ENCODE measurements at regions of chr10 and their contacts with region 1.

Region 1: DNA sequence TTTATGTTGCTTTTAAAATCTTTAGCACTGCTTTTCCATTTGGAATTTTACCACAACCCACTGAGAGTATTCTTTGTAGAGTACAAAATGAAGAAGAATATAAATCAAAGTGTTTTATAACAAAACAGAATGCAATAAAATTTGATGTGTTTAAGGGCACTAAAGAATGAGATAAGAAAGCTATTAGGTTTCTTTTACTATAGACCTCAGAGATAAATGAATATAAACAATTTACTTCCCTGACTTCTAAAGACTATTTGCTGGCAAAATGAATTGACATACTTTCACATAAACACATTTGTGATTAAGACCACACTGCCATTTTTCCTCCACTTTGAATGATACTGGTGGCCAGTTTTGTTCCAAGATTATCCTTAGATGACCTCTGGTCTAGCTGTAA is 124.5 kb downstream of the ITGA8 start:
- DNase-seq: no peak
- H3K4me3 ChIP-seq: no peak overlapping the region
- H3K27ac ChIP-seq: no peak overlapping the region
- H3K4me1 ChIP-seq: no peaks in the 10 kb centered on the region
- H3K27me3 ChIP-seq: no peaks in the 10 kb centered on the region
- CTCF ChIP-seq: no peak
- POLR2A ChIP-seq: no peak

Region 2: DNA sequence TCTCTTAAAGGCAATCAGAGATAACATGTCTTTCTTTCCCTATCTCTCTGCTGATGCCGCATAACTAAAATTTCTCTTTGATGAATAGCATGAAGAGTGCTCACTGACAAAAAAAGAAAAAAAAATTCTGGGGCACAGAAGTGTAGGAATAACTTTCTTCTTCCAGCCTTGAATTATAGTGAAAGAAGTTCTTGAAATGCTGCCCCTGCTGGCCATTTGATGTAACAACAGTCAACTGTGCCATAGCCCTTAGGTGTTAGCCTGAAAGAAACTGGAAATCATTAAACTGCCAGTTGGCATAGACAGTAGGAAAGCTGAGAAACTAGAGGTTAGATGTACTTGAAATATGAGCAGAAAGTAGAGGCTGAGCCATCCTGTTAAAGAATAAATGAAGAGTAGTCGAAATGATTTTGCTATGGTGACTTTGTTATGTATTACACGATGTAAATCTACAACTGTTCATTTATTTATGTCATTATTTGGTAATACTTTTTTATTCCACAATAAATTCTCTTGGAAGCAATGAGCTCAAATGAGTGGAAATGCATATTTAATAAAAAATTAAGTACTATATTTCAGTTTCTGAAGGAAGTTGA is 175.9 kb before region 1 on chr10:
- intact Hi-C with region 1: no loop called
- DNase-seq: peak; percentile 62
- H3K4me3 ChIP-seq: no peak overlapping the region
- H3K27ac ChIP-seq: no peak overlapping the region
- H3K4me1 ChIP-seq: no peaks in the 10 kb centered on the region
- H3K27me3 ChIP-seq: no peaks in the 10 kb centered on the region
- CTCF ChIP-seq: peak; percentile 47 to 91 (median 70)
- POLR2A ChIP-seq: no peak

Region 3: DNA sequence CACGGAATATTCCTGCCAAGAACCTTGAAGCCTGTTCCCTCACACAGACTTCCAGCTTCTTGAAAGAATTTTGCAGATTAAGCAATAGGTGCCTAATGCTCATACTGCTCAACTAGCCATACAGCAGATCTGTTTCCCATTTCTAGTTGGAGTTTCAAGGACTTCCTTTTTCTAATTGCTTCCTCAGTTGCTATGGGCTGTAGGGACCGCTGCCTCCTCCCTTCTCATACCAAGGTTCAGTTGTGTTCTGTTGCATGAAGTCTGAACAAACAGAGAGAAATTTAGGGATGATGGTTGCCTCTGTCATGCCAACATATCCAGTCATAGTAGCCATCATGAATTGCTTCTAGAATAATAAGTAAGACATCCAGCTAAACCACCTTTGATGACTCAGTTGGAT is 117.6 kb after region 1 on chr10:
- intact Hi-C with region 1: loop called (anchors 5 kb)
- DNase-seq: no peak
- H3K4me3 ChIP-seq: no peak overlapping the region
- H3K27ac ChIP-seq: no peak overlapping the region
- H3K4me1 ChIP-seq: no peaks in the 10 kb centered on the region
- H3K27me3 ChIP-seq: no peaks in the 10 kb centered on the region
- CTCF ChIP-seq: no peak
- POLR2A ChIP-seq: no peak

Measured in testis (tissue), 5 donors.